Activated B cell treated with CpG ODN at 0.5 μM for 24 hours (primary cell): ENCODE measurements at regions of chr4 and their contacts with region 1.

Region 1: GRCh38 chr4:152864361-152864760 is 71.8 kb upstream of the FHDC1 start:
- DNase-seq: no peak
- ATAC-seq: no peak
- H3K4me3 Mint-ChIP-seq: no peak overlapping the region
- H3K27ac Mint-ChIP-seq: no peak overlapping the region
- H3K4me1 Mint-ChIP-seq: no peaks in the 10 kb centered on the region
- H3K27me3 Mint-ChIP-seq: no peaks in the 10 kb centered on the region
- CTCF ChIP-seq: no peak

Region 2: GRCh38 chr4:152881974-152882373 is 17.6 kb after region 1 on chr4:
- CTCF ChIA-PET with region 1: no interaction called
- POLR2A ChIA-PET with region 1: no interaction called
- intact Hi-C with region 1: loop called (anchors 2 kb)
- DNase-seq: no peak
- ATAC-seq: no peak
- H3K4me3 Mint-ChIP-seq: no peak overlapping the region
- H3K27ac Mint-ChIP-seq: no peak overlapping the region
- H3K4me1 Mint-ChIP-seq: no peaks in the 10 kb centered on the region
- H3K27me3 Mint-ChIP-seq: no peaks in the 10 kb centered on the region
- CTCF ChIP-seq: no peak

Region 3: DNA sequence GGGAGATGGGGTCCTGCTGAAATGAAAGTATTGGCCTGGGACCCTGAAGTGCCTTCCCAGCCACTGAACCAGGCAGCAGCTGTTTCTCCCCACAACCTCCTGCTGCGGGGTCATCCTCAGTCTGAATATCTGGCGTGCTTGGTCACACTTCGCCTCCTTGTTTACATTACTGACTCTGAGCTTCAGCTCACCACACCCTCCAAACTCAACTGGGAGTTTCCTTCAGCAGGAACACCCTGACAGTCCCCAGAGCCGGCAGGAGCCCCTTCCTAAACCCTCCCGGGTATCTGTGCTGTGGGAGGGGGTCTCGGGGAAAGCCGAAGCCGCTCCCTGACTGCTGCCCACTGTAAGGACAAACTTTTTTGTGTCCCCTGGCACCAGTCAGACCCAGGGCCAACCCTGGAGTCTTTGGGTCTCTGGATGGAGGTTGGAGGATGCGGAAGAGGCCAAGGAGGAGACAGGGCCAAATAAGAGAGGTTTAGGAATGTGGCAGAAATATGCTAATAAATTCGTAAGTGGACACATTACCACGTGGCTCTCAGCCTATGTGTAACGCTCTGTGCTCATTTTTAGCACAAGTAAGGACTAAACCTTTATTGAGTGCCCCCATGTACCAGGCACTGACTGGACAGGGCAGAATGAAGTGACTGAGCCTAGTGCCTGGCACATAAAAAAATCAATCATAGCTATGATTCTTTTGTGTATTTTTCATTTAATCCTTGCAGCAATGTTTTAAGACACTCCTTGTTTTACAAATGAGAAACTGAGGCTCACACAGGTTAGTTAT is 92.5 kb after region 1 on chr4:
- CTCF ChIA-PET with region 1: no interaction called
- POLR2A ChIA-PET with region 1: no interaction called
- intact Hi-C with region 1: no loop called
- DNase-seq: no peak
- ATAC-seq: no peak
- H3K4me3 Mint-ChIP-seq: no peak overlapping the region
- H3K27ac Mint-ChIP-seq: no peak overlapping the region
- H3K4me1 Mint-ChIP-seq: peaks cover 6% of the 10 kb centered on the region
- H3K27me3 Mint-ChIP-seq: peaks cover 1% of the 10 kb centered on the region
- CTCF ChIP-seq: no peak